ENCODE measurements at regions of chr12 and their contacts with region 1.

Region 1: DNA sequence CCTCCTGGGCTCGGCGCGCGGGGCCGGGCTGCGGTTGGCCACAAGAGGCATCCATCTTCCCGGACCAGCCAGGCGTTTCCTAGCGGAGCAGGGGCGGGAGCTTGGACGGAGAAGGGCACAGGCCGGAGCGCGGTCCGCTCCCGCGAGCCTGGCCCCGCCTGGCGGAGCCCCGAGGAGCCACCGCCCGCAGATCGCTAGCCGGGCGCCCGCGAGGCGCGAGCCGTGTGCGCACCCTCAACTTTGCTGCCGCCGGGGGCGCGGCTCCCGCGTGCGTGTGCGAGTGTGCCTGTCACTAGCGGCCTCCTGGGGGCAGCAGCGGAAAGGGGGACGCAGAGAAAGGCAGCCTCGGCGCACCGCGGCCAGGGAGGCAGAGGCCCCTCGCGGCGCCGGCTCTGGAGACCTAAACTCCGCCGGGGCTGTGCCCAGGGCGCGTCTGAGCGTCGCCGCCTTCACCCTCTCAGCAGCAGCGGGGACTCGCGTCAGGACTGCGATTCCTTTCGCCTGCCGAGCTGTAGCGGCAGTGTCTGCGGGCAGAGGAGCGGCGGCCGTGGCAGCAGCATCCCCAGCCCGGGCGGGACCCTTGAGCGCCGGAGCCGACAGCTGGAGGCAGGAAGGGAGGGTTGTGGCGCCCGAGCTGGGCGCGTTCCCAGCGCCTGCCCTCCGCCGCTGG is 644 bp upstream of the SRGAP1 start:
- DNase-seq: peak; percentile 83 to 98 (median 88)

Region 2: GRCh38 chr12:63940310-63941005 is 96.6 kb after region 1 on chr12:
- intact Hi-C with region 1: loop called (anchors 10 kb)
- DNase-seq: peak in 1 of 10 donors; percentile 28

Region 3: GRCh38 chr12:64059685-64060084 is 215.8 kb after region 1 on chr12:
- intact Hi-C with region 1: loop called (anchors 2 kb)
- DNase-seq: no peak

Region 4: GRCh38 chr12:64088431-64089349 is 244.8 kb after region 1 on chr12:
- intact Hi-C with region 1: loop called (anchors 10 kb)
- DNase-seq: no peak

Region 5: DNA sequence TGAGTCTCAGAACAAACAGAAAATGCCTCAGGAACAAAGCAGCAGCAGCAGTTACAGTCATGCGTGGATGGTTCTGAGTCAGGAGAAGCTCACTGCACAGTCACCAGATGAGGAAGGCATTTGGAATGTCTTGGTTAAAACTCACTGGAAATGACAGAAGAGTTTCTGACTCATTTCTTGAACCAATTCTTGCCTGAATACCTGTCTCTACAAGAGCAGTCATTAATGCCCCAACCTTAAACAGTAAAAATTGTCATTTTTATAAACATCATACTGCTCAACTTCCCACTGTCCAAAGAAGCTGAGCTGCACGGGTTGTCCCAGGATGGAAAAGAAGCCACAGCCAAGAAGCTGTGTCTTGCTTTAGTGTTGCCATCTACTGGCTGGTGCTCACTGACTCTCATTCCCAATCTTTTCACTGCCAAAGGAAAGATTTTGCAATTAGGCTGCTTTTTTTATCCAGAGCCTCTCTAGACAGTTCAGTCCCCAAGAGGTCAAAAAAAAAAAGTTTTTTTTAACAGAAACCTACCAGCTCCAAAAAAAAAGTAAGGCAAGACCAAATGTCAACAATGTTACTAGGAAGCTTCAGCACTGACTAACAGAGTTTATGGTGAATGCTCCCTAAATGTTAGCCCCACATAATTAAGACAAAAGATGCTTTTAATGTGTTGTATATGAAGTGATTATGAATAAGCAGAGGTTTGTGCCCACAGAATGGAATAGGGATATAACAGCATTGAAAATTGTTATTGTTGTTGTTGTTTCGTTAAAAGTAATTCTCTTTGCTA is 337.8 kb after region 1 on chr12:
- intact Hi-C with region 1: loop called (anchors 1 kb)
- DNase-seq: peak in 7 of 10 donors; percentile 32 to 86 (median 54)

Region 6: GRCh38 chr12:64256166-64256800 is 412.4 kb after region 1 on chr12:
- intact Hi-C with region 1: loop called (anchors 1 kb)
- DNase-seq: no peak

Region 7: DNA sequence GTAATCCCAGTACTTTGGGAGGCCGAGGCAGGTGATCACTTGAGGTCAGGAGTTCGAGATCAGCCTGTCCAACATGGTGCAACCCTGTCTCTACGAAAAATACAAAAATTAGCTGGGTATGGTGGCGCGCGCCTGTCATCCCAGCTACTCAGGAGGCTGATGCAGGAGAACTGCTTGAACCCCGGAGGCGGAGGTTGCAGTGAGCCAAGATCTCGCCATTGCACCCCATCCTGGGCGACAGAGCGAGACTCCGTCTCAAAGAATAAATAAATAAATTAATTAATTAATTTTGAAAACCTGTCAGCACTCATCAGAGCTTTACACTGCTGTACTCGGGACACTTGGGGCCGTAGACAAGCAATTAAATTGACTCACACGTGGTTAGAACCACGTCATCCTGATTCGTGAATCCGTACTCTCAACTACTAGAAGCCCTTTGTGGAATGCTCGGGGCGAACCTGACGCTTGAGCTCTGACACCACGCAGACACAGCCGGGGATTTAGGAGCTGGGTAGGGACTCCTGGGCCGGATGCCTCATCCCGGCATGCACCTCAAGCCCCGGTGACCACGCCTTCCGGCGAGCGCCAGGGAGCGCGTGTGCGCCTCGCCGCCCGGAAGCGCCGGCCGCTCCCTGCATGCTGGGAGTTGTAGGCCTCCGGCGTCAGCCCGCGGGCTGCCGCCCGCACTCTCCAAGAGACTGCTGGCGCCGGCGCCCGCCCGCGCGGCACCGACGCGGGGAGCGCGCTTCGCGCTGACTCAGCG is 560.0 kb after region 1 on chr12 and contains the start of gene XPOT:
- intact Hi-C with region 1: loop called (anchors 5 kb)
- DNase-seq: peak; percentile 84 to 98 (median 90)